Aorta (tissue), 5 donors: ENCODE measurements at regions of chr3 and their contacts with region 1.

Region 1: DNA sequence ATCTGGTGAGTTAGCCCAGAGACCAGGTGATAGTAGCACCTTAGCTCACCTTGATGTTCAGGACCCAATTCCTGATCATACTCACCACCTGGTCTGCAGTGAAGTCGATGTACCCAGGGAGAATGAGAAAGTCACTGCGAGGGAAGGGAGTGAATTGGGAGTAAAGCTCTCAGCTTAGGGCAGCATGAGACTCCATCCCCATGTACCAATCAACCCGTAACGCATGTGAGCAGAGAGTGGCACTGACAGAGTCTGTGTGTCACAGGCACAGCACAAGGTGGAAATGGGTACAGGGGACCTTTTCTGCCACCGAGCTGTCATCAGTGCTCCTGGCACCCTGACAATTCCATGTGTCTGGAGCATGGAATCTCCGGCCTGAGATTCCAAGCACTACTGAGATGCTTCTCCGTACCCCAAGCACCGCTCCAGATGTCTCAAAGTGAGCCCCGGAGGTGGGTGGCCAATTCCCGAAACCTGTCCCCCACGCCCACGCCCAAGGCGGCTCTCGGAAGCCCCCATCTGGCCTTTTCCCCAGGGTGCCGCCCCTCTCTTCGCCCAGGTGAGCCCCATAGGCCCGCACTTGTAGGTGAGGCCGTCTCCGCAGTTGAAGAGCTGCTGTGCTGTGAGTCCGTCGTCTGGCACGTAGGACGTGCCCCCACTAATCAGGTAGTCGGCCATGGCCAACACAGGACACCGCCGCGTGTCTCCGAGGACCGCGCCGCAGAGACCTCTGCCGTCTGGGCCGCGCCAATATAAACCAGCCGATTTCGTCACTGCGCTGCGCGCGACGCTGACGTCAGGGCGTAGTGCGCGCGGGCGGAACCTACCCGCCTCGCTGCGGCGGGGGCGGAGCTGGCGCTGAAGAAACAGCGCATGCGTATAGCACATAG is at the start of gene IMPDH2:
- DNase-seq: peak; percentile 96 to 98
- ATAC-seq: peak; percentile 97
- H3K4me3 ChIP-seq: peak within 1 kb of the TSS; percentile 19 to 37
- H3K27ac ChIP-seq: peak within 1 kb of the TSS in 1 of 2 donors; percentile 72
- H3K4me1 ChIP-seq: no peaks in the 10 kb centered on the region
- H3K27me3 ChIP-seq: peaks cover 0 to 1% of the 10 kb centered on the region in 2 donors
- total RNA-seq, gene IMPDH2: 84.6 to 101 TPM

Region 2: DNA sequence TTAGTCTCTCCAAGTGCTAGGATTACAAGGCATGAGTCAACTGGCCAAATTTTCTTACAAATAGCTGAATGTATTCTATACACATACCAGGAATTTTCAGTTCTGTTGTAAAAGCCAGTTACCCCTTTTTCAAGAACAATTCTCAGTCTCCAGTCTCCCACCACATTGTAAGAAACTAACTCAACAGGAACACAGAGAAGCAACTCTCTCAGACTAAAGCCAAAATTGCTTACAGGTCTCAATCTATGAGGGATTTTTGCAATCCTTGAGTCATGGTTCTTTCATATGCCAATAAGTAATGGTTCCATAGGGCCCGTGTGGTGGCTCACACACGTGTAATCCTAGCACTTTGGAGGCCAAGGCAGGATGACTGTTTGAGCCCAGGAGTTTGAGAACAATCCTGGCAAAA is 320.4 kb before region 1 on chr3:
- intact Hi-C with region 1: no loop called
- DNase-seq: no peak
- ATAC-seq: no peak
- H3K4me3 ChIP-seq: no peak overlapping the region
- H3K27ac ChIP-seq: peak overlapping the region in 1 of 2 donors; percentile 32
- H3K4me1 ChIP-seq: no peaks in the 10 kb centered on the region
- H3K27me3 ChIP-seq: no peaks in the 10 kb centered on the region

Region 3: DNA sequence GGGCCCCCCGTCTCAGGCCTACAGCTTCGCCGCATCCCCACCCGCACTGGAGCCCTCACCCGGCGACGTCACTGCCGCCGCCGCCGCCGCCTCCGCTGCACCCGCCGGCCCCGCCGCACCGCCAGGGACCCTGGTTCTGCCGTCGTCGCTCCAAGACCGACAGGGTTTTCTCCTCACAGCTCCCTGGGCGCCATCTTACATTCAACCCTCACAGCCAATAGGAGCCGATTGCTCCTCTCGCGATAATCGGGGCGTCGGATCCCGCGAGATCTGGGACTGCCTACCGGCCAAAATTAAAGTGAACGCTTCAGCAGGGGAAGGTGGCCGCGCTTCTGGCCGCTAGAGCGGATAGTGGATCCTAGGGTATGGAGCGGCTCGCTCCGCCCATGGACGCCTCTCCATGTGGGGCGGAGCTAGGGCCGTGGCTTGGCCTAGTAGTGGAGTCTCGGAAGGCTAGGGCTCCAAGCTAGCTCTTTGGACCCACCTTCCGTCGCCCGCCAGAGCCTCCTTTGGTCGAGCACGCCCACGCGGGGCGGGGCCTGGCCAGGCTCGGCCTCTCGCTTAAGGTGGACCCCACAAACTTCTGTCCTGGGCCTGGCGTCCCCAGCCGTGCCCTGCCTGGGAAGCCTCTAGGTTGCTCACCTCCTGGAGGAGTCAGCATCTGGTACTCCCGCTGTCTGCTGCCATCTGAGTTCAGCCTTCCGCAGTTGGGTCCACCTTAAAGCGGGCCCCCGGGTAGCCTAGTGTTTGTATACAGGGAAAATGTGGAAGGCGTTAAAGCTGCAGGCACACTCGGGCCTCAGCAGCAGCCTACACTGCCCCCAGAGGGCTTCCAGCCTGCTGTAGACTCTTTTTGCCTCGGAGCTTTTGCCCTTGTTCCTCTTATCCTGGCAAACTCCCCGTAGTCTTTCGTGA is 65.2 kb after region 1 on chr3 and contains the start of gene QRICH1:
- intact Hi-C with region 1: loop called in 1 of 2 experiments (anchors 5 kb)
- DNase-seq: peak; percentile 99
- ATAC-seq: peak; percentile 97
- H3K4me3 ChIP-seq: peak within 1 kb of the TSS; percentile 71 to 88
- H3K27ac ChIP-seq: peak within 1 kb of the TSS; percentile 62 to 77
- H3K4me1 ChIP-seq: no peaks in the 10 kb centered on the region
- H3K27me3 ChIP-seq: no peaks in the 10 kb centered on the region
- total RNA-seq, gene QRICH1: 77.3 to 103 TPM